PC-9 (cell line): ENCODE measurements at regions of chr6 and their contacts with region 1.

Region 1: GRCh38 chr6:156060013-156060412 is 604.4 kb upstream of the NOX3 start:
- DNase-seq: no peak
- H3K4me3 ChIP-seq: no peak overlapping the region
- H3K27ac ChIP-seq: no peak overlapping the region
- H3K4me1 ChIP-seq: no peaks in the 10 kb centered on the region
- H3K27me3 ChIP-seq: no peaks in the 10 kb centered on the region
- CTCF ChIP-seq: no peak

Region 2: GRCh38 chr6:156634951-156635371 is 574.9 kb after region 1 on chr6:
- CTCF ChIA-PET with region 1: no interaction called
- POLR2A ChIA-PET with region 1: no interaction called
- intact Hi-C with region 1: no loop called
- DNase-seq: no peak
- H3K4me3 ChIP-seq: no peak overlapping the region
- H3K27ac ChIP-seq: no peak overlapping the region
- H3K4me1 ChIP-seq: no peaks in the 10 kb centered on the region
- H3K27me3 ChIP-seq: no peaks in the 10 kb centered on the region
- CTCF ChIP-seq: no peak

Region 3: GRCh38 chr6:156771047-156771446 is 711.0 kb after region 1 on chr6:
- CTCF ChIA-PET with region 1: no interaction called
- POLR2A ChIA-PET with region 1: interaction called, 18 read pairs
- intact Hi-C with region 1: no loop called
- DNase-seq: no peak
- H3K4me3 ChIP-seq: no peak overlapping the region
- H3K27ac ChIP-seq: no peak overlapping the region
- H3K4me1 ChIP-seq: peaks cover 17% of the 10 kb centered on the region
- H3K27me3 ChIP-seq: no peaks in the 10 kb centered on the region
- CTCF ChIP-seq: no peak